ENCODE measurements at regions of chrX and their contacts with region 1.

Region 1: DNA sequence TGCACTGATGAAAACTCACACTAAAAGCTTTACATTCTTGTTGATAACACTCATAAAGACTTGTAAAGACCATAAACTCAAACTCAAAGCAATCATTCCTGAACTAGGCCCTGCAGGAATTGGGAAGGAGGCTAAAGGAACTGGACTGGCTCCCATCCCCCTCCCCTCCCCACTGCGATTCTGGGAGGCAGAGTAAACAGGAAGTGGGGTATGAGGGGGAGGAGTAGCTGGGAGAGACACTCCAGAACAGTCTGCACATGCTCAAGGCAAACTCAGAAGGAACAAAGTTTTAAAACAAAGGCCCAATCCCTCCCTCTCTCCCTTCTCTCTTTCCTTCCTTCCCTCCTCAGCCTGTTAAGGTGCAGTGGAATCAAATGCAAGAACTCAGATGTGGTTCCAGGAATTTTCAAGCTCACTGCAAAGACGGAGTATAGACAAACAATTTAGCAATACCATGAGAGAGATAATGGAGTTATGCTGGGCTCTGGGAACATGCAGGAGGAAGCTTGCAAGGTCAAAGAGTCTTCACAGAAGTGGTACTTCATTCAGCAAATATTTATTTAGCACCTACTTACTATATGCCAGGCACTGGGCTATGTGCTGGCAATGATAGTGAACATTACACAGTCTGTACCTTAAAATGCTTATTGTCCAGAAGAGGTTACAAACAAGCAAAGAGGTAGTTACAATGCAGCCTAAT is 15.9 kb downstream of the MID1IP1 start:
- DNase-seq: no peak
- H3K4me3 Mint-ChIP-seq: no peak overlapping the region
- H3K27ac Mint-ChIP-seq: no peak overlapping the region
- H3K4me1 Mint-ChIP-seq: peaks cover 7% of the 10 kb centered on the region
- H3K27me3 Mint-ChIP-seq: no peaks in the 10 kb centered on the region

Region 2: DNA sequence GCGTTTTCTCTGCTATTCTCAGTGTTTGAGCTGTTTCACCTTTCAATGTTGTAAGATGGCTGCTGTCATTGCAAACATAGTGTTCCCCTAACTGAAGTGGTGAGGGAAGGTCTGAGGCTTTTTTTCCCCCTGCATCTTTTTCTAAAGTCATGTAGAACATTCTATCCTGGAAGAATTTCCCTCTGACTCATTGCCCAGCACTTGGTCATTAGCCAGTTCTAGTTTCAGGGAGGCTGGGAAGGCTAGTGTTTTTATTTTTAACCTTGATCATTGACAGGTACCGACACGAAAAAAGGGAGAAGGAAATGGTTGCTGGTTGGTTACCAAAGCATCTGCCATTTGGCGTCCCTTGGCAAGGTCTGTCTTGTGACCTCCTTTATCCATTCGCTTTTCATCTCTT is 1239.1 kb before region 1 on chrX:
- CTCF ChIA-PET with region 1: no interaction called
- intact Hi-C with region 1: no loop called
- DNase-seq: no peak
- H3K4me3 Mint-ChIP-seq: no peak overlapping the region
- H3K27ac Mint-ChIP-seq: no peak overlapping the region
- H3K4me1 Mint-ChIP-seq: no peaks in the 10 kb centered on the region
- H3K27me3 Mint-ChIP-seq: peaks cover 12% of the 10 kb centered on the region

Region 3: DNA sequence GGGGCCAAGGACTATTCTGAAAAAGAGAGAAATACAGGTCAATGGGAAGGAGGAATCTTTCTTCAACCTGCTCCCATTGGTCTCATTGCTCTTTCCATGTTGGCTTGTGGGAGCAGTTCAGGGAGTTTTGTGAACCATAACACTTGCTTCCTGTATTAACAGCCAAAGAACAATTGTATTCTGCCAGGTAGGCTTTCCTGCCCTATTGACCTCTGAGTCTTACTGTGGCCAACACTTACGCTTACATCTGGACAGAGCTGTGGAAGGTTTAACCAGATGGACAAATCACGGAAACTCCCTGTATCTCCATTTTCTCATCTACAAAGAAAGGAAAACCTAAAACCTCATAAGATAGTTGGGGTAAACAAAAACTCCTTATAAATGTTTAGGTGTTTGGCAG is 14.8 kb after region 1 on chrX:
- CTCF ChIA-PET with region 1: no interaction called
- intact Hi-C with region 1: no loop called
- DNase-seq: no peak
- H3K4me3 Mint-ChIP-seq: no peak overlapping the region
- H3K27ac Mint-ChIP-seq: no peak overlapping the region
- H3K4me1 Mint-ChIP-seq: peaks cover 4% of the 10 kb centered on the region
- H3K27me3 Mint-ChIP-seq: no peaks in the 10 kb centered on the region

Region 4: DNA sequence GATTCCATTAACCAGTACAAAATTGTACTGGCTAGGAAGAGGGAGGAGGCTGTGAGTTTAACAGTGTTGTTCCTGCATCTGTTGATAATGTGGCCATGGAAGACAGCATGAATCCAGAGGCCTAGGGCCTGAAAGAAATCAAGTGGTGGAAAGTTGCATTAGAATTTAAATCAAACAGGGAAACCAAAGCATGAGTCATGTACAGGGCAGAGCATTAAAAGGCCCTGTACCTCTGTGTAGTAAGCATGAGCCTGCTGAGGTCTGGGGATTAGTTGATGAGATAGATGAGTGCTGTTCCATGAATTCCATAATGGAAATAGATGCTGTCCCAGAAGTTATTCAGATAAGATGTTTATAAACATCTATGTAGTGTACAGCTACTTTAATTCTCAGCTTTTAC is 42.4 kb after region 1 on chrX:
- CTCF ChIA-PET with region 1: no interaction called
- intact Hi-C with region 1: loop called (anchors 2 kb)
- DNase-seq: no peak
- H3K4me3 Mint-ChIP-seq: no peak overlapping the region
- H3K27ac Mint-ChIP-seq: no peak overlapping the region
- H3K4me1 Mint-ChIP-seq: no peaks in the 10 kb centered on the region
- H3K27me3 Mint-ChIP-seq: no peaks in the 10 kb centered on the region

Region 5: DNA sequence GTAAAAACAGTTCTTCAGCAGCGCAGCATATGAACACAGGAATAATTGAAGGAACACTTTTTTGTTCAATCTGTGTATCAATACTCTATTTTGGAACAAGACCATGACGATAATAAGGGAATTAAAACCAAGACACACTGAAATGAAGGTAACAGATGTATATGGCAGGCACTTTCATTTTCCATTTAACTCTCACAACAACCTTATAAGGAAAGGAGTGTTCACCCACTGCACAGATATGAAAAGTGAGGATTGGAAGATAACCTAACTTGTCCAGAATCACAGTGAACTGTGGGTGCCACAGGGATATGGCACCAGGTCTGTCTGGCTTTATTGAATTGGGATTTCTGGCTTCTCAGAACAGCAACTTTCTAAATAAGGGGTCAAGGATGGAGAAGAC is 137.4 kb after region 1 on chrX:
- CTCF ChIA-PET with region 1: no interaction called
- intact Hi-C with region 1: no loop called
- DNase-seq: no peak
- H3K4me3 Mint-ChIP-seq: no peak overlapping the region
- H3K27ac Mint-ChIP-seq: no peak overlapping the region
- H3K4me1 Mint-ChIP-seq: peaks cover 2% of the 10 kb centered on the region
- H3K27me3 Mint-ChIP-seq: no peaks in the 10 kb centered on the region